Ascending aorta (tissue), 2 donors: ENCODE measurements at regions of chr19 and their contacts with region 1.

Region 1: DNA sequence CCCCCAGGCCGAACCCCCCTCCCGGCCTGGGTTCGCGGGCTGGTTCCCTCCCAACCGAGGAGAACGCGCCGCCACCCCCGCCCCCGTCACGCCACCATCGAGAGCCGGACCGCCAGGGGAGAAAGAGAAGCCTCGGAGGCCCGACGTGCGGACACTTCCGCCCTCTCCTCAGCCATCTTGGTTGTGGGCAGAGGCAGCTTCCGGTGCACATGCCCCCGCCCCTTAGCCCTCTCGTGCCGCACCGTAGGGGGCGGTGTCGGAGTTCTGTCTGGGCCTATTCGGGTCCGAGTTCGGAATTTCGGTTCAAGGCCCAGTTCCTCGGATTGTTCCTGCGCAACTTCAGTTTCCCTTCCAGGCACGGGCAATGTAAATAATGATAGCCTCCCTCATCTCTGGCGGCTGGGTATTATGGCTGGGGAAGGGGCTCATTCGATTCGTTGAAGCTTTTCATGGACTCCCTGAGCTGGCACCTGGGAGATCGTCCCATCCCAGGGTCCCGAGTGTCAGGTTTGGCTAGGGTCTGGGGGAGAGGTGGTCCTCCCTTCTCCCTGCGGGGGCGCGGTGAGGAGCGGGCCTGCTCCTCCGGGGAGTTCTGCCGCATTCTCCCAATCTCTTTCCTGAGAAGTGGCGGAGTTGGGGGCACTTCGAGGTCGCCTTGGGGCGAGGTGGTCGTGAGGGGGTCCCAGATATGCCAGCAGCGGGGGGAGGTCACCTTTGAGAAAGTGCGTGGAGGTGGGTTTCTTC is at the starts of genes IER2 and STX10:
- DNase-seq: peak; percentile 86 to 98
- H3K4me3 ChIP-seq: peak within 1 kb of the TSS; percentile 92 to 97
- H3K27ac ChIP-seq: peak within 1 kb of the TSS; percentile 99
- H3K4me1 ChIP-seq: peaks cover 5 to 8% of the 10 kb centered on the region in 2 donors
- H3K27me3 ChIP-seq: no peaks in the 10 kb centered on the region
- CTCF ChIP-seq: peak; percentile 47 to 56 (median 55)
- total RNA-seq, gene IER2: 907 TPM
- total RNA-seq, gene STX10: 31.6 TPM

Region 2: GRCh38 chr19:12777217-12778016 is 372.9 kb before region 1 on chr19:
- intact Hi-C with region 1: loop called (anchors 5 kb)
- DNase-seq: peak; percentile 43 to 89
- H3K4me3 ChIP-seq: peak overlapping the region; percentile 68 to 70
- H3K27ac ChIP-seq: peak overlapping the region; percentile 93 to 96
- H3K4me1 ChIP-seq: peaks cover 21 to 49% of the 10 kb centered on the region in 2 donors
- H3K27me3 ChIP-seq: no peaks in the 10 kb centered on the region
- CTCF ChIP-seq: peak; percentile 97 to 98 (median 98)

Region 3: GRCh38 chr19:13117772-13118423 is 32.5 kb before region 1 on chr19 and contains the start of gene NACC1:
- intact Hi-C with region 1: loop called (anchors 1 kb)
- DNase-seq: peak; percentile 56 to 94
- H3K4me3 ChIP-seq: peak within 1 kb of the TSS; percentile 94 to 100
- H3K27ac ChIP-seq: peak within 1 kb of the TSS; percentile 57 to 61
- H3K4me1 ChIP-seq: peaks cover 5 to 29% of the 10 kb centered on the region in 2 donors
- H3K27me3 ChIP-seq: no peaks in the 10 kb centered on the region
- CTCF ChIP-seq: no peak
- total RNA-seq, gene NACC1: 35.5 TPM

Region 4: DNA sequence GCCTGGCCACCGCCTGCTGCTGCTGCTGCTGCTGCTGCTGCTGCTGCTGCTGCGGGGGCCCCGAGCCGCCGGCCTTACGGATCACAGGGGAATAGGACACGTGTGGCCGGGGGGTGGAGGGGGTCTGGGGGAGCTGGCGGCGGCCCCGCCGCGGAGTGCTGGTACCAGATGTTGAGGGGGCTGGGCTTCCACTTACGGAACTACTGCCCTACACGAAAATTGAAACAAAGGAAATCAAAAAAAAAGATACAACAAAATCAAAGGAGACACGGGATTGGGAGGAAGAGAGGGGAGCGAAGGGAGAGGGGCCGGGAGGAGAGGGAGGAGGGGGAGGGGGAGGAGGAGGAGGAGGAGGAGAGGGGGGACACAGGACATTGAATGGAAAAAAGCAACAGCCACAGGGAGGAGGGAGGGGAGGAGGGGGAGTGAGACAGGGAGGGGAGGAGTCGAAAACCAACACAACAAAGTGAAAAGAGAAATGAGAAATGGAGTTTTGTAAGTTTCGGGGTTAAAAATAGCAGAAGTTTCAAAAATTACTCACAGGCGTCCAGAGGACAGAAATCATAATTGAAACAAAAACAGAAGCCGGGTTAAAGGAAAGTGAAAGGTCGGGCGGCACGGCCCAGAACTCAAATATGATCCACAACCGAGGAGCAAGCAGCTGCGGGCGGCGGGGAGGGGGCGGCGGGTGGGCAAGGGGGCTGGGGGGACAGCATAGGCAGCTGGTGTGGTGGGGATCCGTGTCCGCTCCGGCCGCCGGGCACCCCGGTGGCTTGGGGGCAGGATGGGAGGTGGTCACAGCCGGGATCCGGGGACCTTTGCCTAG is 57.7 kb after region 1 on chr19:
- intact Hi-C with region 1: loop called (anchors 2 kb)
- DNase-seq: peak in 1 of 2 donors; percentile 80
- H3K4me3 ChIP-seq: peak overlapping the region; percentile 64 to 80
- H3K27ac ChIP-seq: peak overlapping the region; percentile 85 to 88
- H3K4me1 ChIP-seq: peaks cover 3 to 9% of the 10 kb centered on the region in 2 donors
- H3K27me3 ChIP-seq: no peaks in the 10 kb centered on the region
- CTCF ChIP-seq: no peak

Region 5: DNA sequence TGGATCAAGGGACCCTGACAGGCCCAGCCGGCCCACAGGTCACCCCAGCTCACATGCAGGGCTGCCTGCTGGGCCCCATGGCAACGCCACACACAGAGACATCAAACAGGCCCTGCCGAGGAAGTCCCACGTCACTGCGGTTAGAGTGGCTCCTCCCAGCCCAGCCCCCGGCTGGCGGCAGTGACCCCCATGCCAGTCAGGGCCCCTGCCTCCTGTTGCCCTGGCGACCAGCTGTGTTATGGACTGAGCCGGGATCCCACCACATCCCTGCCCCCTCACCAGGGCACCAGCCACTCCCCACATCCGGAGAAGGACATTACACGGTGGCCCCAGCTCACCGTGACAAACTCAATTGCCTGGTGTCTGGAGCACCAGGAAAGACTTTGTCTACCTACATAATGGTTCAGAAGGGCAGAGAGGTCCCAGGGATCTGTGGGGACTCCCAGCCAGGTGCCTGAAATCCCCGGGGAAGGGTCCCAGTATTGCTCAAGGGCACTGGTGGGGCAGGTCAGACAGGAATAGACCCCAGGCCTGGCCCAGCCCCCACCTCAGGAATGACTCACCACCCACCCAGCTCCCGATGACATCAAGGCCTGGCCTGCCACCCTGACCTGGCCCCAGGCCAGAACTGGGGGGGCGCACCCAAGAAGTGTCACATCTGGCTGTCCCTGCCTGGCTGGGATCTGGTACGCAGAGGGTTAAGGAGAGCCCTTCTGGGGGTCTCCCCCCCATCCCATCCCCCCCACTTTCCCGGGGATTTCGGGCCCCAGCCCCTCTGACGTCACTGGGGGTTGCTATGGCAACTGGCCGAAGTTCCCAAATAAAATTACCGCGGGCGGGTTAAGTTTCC is 696.4 kb after region 1 on chr19:
- intact Hi-C with region 1: loop called (anchors 5 kb)
- DNase-seq: peak; percentile 91 to 98
- H3K4me3 ChIP-seq: peak overlapping the region; percentile 50 to 70
- H3K27ac ChIP-seq: peak overlapping the region; percentile 99 to 100
- H3K4me1 ChIP-seq: peaks cover 20 to 59% of the 10 kb centered on the region in 2 donors
- H3K27me3 ChIP-seq: no peaks in the 10 kb centered on the region
- CTCF ChIP-seq: no peak